ENCODE measurements at regions of chr2 and their contacts with region 1.

Region 1: GRCh38 chr2:154375579-154375931 is 322.9 kb upstream of the KCNJ3 start:
- DNase-seq: peak; percentile 54
- ATAC-seq: peak; percentile 90
- H3K4me3 ChIP-seq: no peak overlapping the region
- H3K27ac ChIP-seq: no peak overlapping the region
- H3K4me1 ChIP-seq: no peaks in the 10 kb centered on the region
- H3K27me3 ChIP-seq: 0 out of 5 replicates have a peak, but pooled peaks cover 0 to 3% of the 10 kb centered on the region in 2 experiments
- CTCF ChIP-seq: peak; percentile 71
- EP300 ChIP-seq: no peak
- POLR2A ChIP-seq: no peak
- RAD21 ChIP-seq: no peak

Region 2: GRCh38 chr2:153770359-153770991 is 605.1 kb before region 1 on chr2:
- CTCF ChIA-PET with region 1: no interaction called
- POLR2A ChIA-PET with region 1: no interaction called
- in situ Hi-C with region 1: no loop called
- intact Hi-C with region 1: loop called (anchors 1 kb)
- DNase-seq: no peak
- ATAC-seq: peak; percentile 61; the same call in 2 of the 3 replicates
- H3K4me3 ChIP-seq: no peak overlapping the region
- H3K27ac ChIP-seq: no peak overlapping the region
- H3K4me1 ChIP-seq: no peaks in the 10 kb centered on the region
- H3K27me3 ChIP-seq: no peaks in the 10 kb centered on the region
- CTCF ChIP-seq: peak; percentile 42
- EP300 ChIP-seq: no peak
- POLR2A ChIP-seq: no peak
- RAD21 ChIP-seq: no peak

Region 3: DNA sequence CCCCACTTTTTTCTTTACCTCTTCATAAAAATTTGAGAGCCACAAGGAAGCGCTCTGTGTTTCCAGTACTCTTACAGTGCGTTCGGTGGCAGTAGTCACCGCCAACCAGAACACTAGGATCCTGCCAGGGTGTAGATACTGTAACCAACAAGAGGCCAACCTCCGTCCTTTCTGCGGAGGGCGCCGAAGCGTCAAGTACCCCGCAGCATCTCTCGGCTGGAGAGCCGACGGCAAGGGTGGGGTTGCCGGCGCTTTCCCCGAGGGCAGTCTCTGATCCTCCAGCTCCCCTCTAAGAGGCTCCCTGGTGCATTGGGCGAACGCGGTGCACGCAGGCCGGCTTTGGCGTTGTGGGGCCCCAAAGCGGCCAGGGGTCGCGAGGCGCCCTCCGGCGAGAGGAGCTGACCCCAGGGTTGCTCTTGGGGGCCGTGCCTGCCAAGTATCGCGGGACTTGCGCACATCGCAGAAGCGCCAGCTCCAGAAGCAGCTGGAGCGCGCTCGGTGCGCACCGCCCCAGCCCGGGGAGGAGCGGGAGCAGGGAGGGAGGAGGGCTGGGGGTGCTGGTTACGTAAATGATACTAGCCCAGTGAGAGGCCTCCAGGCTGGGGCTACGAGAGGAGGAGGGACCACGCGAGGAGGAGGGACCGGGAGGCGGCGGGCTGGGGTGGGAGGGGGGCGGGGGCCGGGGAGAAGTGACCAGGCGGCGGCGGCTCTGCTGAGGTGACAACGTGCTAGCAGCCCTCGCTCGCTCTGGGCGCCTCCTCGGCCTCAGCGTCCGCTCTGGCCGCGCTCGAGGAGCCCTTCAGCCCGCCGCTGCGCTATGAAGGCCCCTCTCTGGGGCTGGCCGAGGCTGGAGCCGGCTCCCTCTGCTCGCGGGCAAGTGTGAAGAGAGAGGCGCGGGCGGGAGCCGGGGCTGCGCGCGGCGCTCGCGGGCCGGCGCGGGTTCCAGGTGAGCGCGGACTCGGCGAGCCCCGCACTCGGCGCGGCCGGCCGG is 504.0 kb before region 1 on chr2 and contains the start of gene GALNT13:
- CTCF ChIA-PET with region 1: no interaction called
- POLR2A ChIA-PET with region 1: no interaction called
- in situ Hi-C with region 1: no loop called
- intact Hi-C with region 1: loop called (anchors 2 kb)
- DNase-seq: peak; percentile 57
- ATAC-seq: peak; percentile 82
- H3K4me3 ChIP-seq: peak within 1 kb of the TSS in 2 of 3 experiments; percentile 40 to 51; a peak in 4 of 6 replicates
- H3K27ac ChIP-seq: no peak within 1 kb of the TSS
- H3K4me1 ChIP-seq: no peaks in the 10 kb centered on the region
- H3K27me3 ChIP-seq: peaks cover 2 to 24% of the 10 kb centered on the region in 2 experiments; a peak in 2 of 5 replicates
- CTCF ChIP-seq: 0 out of 2 replicates have a peak, but pooled peaks have one; percentile 6
- EP300 ChIP-seq: no peak
- POLR2A ChIP-seq: no peak
- RAD21 ChIP-seq: no peak
- total RNA-seq, gene GALNT13: 4.8 and 5.0 TPM in 2 replicates

Region 4: DNA sequence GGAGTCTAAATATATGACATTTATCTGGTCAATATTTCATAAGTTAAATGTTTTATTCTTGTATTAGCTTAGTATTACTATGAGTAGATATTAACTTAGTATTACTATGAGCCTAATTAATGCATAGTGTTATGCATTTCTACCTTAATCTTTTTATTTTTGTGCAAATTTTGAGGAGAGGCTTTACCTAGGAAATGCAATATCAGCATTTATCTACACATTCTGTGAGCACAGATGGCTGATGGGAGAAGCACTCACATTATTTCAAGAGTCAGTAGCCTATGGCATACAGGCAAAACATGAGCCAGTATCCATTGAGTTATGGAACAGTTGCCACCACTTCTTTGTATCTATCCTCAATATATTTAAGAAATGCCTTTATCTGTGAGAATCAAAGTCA is 81.7 kb before region 1 on chr2:
- CTCF ChIA-PET with region 1: no interaction called
- POLR2A ChIA-PET with region 1: no interaction called
- in situ Hi-C with region 1: no loop called
- intact Hi-C with region 1: no loop called
- DNase-seq: no peak
- ATAC-seq: no peak
- H3K4me3 ChIP-seq: no peak overlapping the region
- H3K27ac ChIP-seq: no peak overlapping the region
- H3K4me1 ChIP-seq: no peaks in the 10 kb centered on the region
- H3K27me3 ChIP-seq: no peaks in the 10 kb centered on the region
- CTCF ChIP-seq: no peak
- EP300 ChIP-seq: no peak
- POLR2A ChIP-seq: no peak
- RAD21 ChIP-seq: no peak

Region 5: DNA sequence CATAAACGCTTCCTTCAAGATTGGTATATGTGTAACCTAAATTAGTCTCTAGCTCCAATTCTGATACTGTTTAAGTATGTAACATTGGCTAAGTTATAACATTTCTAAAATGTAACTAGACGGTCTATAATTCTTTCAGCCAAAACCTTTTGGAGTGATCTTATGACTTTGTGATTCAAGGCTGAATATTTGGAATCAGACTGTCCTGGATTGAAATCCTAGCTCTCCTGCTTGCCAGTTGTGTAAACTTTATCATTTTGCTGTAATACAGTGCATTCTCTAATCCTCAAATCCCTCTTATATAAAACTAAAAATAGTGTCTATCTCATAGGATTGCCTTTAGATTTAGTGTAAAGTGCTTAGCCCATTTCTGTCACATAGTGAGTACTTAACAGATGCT is 14.3 kb before region 1 on chr2:
- CTCF ChIA-PET with region 1: no interaction called
- POLR2A ChIA-PET with region 1: no interaction called
- in situ Hi-C with region 1: no loop called
- intact Hi-C with region 1: no loop called
- DNase-seq: no peak
- ATAC-seq: no peak
- H3K4me3 ChIP-seq: no peak overlapping the region
- H3K27ac ChIP-seq: no peak overlapping the region
- H3K4me1 ChIP-seq: no peaks in the 10 kb centered on the region
- H3K27me3 ChIP-seq: no peaks in the 10 kb centered on the region
- CTCF ChIP-seq: no peak
- EP300 ChIP-seq: no peak
- POLR2A ChIP-seq: no peak
- RAD21 ChIP-seq: no peak

Region 6: DNA sequence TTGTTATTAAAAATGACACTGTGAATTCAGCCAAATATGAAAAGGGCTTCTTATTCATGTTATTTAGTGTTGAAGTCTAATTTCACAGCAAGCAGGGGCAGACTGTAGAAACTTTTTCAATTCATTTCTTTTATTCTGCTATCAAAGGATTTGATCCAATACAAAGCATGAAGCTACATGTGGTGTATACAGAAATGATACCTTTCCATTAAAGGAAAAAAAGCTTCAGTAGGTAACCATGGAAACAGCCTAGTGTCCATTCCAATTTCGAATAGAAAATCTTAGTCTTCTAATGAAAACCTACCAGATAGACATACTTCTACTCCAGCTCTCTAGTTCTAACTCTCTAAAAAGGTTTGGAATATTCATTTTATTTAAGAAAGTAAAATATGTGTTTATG is 46.7 kb after region 1 on chr2:
- CTCF ChIA-PET with region 1: no interaction called
- POLR2A ChIA-PET with region 1: no interaction called
- in situ Hi-C with region 1: no loop called
- intact Hi-C with region 1: no loop called
- DNase-seq: no peak
- ATAC-seq: no peak
- H3K4me3 ChIP-seq: no peak overlapping the region
- H3K27ac ChIP-seq: no peak overlapping the region
- H3K4me1 ChIP-seq: no peaks in the 10 kb centered on the region
- H3K27me3 ChIP-seq: no peaks in the 10 kb centered on the region
- CTCF ChIP-seq: no peak
- EP300 ChIP-seq: no peak
- POLR2A ChIP-seq: no peak
- RAD21 ChIP-seq: no peak

Region 7: DNA sequence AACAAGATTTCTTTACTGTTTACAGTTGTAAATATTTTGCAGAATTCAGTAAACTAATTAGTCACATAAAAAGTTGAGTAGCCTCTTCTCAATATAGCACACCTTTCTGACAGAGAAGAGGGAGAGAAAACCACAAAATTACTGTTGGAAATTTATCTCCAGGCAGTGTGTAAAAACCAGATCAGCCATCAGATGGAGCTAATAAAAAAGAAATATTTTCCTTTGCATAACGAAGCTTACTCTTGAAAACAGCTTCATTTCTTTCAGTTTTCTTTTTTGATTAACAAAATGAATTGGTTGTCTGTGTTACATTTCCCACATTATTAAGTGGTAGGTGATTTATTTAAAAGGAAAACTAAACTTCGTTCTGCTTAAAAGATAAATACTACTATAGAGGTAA is 63.6 kb after region 1 on chr2:
- CTCF ChIA-PET with region 1: no interaction called
- POLR2A ChIA-PET with region 1: no interaction called
- in situ Hi-C with region 1: no loop called
- intact Hi-C with region 1: no loop called
- DNase-seq: peak; percentile 13
- ATAC-seq: peak; percentile 78
- H3K4me3 ChIP-seq: no peak overlapping the region
- H3K27ac ChIP-seq: no peak overlapping the region
- H3K4me1 ChIP-seq: 0 out of 2 replicates have a peak, but pooled peaks cover 6% of the 10 kb centered on the region
- H3K27me3 ChIP-seq: no peaks in the 10 kb centered on the region
- CTCF ChIP-seq: peak; percentile 68
- EP300 ChIP-seq: no peak
- POLR2A ChIP-seq: no peak
- RAD21 ChIP-seq: peak; percentile 59; the same call in 1 of the 2 replicates

Measured in HepG2 (cell line).